Upper lobe of right lung (tissue), 1 donor: ENCODE measurements at regions of chr6 and their contacts with region 1.

Region 1: GRCh38 chr6:138765896-138766655 is 7.5 kb upstream of the CCDC28A start:
- DNase-seq: no peak
- ATAC-seq: peak; percentile 36
- H3K4me3 ChIP-seq: no peak overlapping the region
- H3K27ac ChIP-seq: no peak overlapping the region
- H3K4me1 ChIP-seq: no peaks in the 10 kb centered on the region
- H3K27me3 ChIP-seq: no peaks in the 10 kb centered on the region
- CTCF ChIP-seq: peak; percentile 68

Region 2: DNA sequence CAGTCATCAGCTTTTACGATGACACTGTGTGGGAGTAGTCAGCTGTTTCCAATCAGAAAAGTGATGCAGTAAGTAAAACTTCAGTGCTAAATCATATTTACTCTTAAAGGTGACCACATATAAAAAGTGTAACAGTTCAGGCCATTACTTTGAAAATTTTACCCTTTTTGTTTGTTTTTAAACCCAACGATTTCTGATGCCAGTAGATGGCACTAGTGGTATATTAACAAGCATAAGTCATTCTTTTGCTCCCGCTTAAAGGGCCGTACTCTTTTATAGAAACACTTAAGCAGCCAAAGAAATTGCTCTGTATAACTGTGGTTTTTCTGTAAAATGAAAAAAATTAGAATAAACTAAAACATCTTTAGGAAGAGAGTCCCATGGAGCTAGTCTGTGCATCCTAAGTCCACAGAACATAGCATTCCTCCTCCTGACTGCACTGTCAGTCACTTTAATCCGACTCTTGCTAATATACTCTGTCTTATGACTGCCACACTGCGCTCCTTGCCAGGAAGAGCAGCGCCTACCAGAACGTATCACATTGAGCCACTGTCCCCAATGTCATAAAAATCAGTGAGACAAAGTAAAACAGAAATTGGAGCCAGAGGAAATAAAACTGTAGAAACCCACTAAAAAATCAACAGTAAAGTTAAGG is 337.0 kb before region 1 on chr6:
- intact Hi-C with region 1: loop called (anchors 10 kb)
- DNase-seq: no peak
- ATAC-seq: peak; percentile 29
- H3K4me3 ChIP-seq: no peak overlapping the region
- H3K27ac ChIP-seq: no peak overlapping the region
- H3K4me1 ChIP-seq: peaks cover 6% of the 10 kb centered on the region
- H3K27me3 ChIP-seq: no peaks in the 10 kb centered on the region
- CTCF ChIP-seq: peak; percentile 62

Region 3: DNA sequence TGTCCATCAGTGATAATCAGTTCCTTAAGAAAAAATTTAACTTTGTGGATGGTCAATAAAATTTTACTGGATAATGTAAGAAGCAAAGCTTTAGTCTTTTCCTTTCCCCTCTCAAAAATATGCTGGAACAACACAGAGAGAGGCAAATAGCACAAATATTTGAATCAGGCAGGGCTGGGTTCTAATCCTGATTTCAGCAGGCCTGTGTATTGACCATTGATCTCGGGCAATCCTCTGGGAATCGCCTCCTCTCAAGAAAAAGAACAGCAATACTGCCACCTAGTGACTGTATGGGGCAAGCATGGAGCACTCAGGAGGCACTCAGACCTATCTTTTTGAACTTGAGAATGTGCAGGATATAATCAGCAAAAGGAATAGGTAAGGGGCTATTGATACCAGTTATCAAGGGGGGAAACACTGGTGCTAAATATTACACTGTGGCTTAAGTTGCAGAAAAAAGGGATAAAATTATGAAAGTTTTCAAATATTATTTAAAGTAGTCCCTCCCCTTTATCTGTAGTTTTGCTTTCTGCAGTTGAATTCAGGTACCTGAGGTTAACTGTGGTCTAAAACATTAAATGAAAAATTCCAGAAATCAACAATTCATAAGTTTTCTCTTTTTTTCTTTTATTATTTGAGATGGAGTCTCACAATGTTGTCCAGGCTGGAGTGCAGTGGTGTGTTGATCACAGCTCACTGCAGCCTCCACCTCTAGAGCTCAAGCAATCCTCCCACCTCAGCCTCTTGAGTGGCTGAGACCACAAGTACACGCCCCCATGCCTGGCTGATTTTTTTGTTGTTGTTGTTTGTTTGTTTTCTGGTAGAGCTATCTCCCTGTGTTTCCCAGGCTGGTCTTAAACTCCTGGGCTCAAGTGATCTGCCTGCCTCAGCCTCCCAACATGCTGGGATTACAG is 175.0 kb before region 1 on chr6:
- intact Hi-C with region 1: loop called (anchors 5 kb)
- DNase-seq: no peak
- ATAC-seq: peak; percentile 75
- H3K4me3 ChIP-seq: no peak overlapping the region
- H3K27ac ChIP-seq: no peak overlapping the region
- H3K4me1 ChIP-seq: peaks cover 25% of the 10 kb centered on the region
- H3K27me3 ChIP-seq: no peaks in the 10 kb centered on the region
- CTCF ChIP-seq: peak; percentile 90

Region 4: GRCh38 chr6:138752017-138752416 is 14.1 kb before region 1 on chr6:
- intact Hi-C with region 1: no loop called
- DNase-seq: no peak
- ATAC-seq: no peak
- H3K4me3 ChIP-seq: no peak overlapping the region
- H3K27ac ChIP-seq: no peak overlapping the region
- H3K4me1 ChIP-seq: no peaks in the 10 kb centered on the region
- H3K27me3 ChIP-seq: no peaks in the 10 kb centered on the region
- CTCF ChIP-seq: no peak